ENCODE measurements at regions of chr14 and their contacts with region 1.

Region 1: DNA sequence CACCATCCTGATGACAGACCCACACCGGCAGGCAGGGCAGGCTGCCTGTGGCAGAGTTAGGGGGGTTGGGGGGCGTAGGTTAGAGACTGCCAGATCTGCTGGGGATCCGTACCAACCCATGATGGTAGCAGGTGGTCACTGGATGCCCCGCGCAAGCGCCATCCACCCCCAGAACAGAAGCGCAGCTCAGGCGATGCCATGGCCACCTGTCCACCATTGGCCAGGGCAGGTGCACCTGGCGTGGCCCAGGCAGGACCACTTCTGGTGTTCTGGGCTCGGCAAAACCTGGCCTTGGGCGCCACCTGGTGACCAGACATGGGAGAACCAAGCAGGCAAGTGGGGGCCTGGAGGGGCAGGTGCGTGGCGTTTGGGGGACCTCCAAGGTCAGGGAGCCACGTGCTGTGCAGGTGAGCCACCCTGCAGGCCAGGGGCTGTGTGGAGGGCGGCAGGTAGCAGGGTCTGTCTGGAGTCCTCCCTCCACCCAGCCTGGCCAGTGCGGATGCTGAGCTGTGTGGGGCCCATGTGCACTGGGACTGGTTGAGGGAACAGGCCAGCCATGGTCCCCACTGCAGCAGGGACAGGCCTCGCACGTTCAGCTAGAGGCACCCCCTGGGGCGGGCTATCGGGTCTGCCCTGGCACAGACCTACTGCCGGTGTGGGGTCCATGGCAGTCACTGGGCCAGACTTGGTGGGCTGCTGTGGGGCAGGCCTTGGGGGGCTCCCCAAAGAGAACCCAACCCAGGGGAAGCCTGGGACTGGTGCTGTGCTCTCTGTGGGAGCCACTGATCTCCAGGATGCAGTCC is 15.6 kb downstream of the BAG5 start:
- DNase-seq: peak; percentile 76
- H3K4me3 Mint-ChIP-seq: no peak overlapping the region
- H3K27ac Mint-ChIP-seq: no peak overlapping the region
- H3K4me1 Mint-ChIP-seq: no peaks in the 10 kb centered on the region
- H3K27me3 Mint-ChIP-seq: no peaks in the 10 kb centered on the region

Region 2: DNA sequence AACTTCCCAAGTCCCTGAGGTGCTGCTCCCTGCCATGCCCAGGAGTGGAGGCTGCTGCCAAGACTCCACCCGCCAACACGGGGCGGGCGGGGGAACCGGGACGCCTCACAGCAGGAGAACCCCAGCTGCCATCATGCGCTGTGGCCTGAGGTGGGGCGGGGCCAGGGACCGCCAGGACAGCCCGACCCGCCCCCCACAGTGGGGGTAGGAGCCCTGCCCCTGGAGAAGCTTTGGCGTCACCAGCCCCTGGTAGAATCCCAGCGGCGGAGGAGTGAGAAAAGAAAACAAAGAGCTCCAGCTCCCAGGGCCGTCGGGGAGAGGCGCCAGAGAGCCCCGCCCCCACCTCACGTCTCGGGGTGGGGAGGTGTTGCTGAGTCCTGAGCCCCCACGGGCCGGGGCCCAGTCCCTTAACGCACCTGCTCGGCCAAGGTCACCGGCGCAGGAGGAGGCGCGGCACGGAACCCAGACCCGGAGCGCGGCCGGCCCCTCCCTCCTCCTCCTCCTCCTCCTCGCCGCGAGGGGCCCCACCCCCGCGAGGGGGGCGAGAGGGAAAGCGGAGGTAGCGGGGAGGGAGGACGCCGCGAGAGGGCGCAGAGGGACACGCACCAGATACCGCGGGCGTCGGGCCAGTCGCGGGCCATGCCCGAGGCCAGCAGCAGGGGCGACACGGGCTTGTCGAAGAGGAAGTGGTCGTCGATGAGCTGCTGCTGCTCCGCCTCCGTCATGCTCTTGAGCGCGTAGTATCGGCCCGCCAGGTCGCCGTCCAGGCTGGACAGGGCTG is 26.0 kb before region 1 on chr14:
- CTCF ChIA-PET with region 1: interaction called, 25 read pairs
- POLR2A ChIA-PET with region 1: interaction called, 3 read pairs
- DNase-seq: peak; percentile 69
- H3K4me3 Mint-ChIP-seq: peak overlapping the region; percentile 58
- H3K27ac Mint-ChIP-seq: no peak overlapping the region
- H3K4me1 Mint-ChIP-seq: peaks cover 9% of the 10 kb centered on the region
- H3K27me3 Mint-ChIP-seq: peaks cover 27% of the 10 kb centered on the region

Region 3: GRCh38 chr14:103696466-103697071 is 149.7 kb after region 1 on chr14:
- CTCF ChIA-PET with region 1: no interaction called
- POLR2A ChIA-PET with region 1: no interaction called
- DNase-seq: no peak
- H3K4me3 Mint-ChIP-seq: no peak overlapping the region
- H3K27ac Mint-ChIP-seq: no peak overlapping the region
- H3K4me1 Mint-ChIP-seq: peaks cover 6% of the 10 kb centered on the region
- H3K27me3 Mint-ChIP-seq: no peaks in the 10 kb centered on the region